ENCODE measurements at regions of chr14 and their contacts with region 1.

Region 1: GRCh38 chr14:99415496-99416281 is 65.0 kb downstream of the SETD3 start:
- DNase-seq: peak; percentile 23 to 40
- ATAC-seq: peak; percentile 92 to 95
- H3K4me3 ChIP-seq: no peak overlapping the region
- H3K27ac ChIP-seq: no peak overlapping the region
- H3K4me1 ChIP-seq: peaks cover 14 to 20% of the 10 kb centered on the region in 2 donors
- H3K27me3 ChIP-seq: no peaks in the 10 kb centered on the region
- CTCF ChIP-seq: peak; percentile 66 to 82 (median 75)
- POLR2A ChIP-seq: no peak

Region 2: GRCh38 chr14:99320105-99320572 is 95.5 kb before region 1 on chr14:
- in situ Hi-C with region 1: no loop called
- intact Hi-C with region 1: loop called (anchors 5 kb)
- DNase-seq: no peak
- ATAC-seq: no peak
- H3K4me3 ChIP-seq: no peak overlapping the region
- H3K27ac ChIP-seq: no peak overlapping the region
- H3K4me1 ChIP-seq: no peaks in the 10 kb centered on the region
- H3K27me3 ChIP-seq: peaks cover 0 to 4% (median 0%) of the 10 kb centered on the region in 3 donors
- CTCF ChIP-seq: peak; percentile 30 to 70 (median 48)
- POLR2A ChIP-seq: no peak

Region 3: DNA sequence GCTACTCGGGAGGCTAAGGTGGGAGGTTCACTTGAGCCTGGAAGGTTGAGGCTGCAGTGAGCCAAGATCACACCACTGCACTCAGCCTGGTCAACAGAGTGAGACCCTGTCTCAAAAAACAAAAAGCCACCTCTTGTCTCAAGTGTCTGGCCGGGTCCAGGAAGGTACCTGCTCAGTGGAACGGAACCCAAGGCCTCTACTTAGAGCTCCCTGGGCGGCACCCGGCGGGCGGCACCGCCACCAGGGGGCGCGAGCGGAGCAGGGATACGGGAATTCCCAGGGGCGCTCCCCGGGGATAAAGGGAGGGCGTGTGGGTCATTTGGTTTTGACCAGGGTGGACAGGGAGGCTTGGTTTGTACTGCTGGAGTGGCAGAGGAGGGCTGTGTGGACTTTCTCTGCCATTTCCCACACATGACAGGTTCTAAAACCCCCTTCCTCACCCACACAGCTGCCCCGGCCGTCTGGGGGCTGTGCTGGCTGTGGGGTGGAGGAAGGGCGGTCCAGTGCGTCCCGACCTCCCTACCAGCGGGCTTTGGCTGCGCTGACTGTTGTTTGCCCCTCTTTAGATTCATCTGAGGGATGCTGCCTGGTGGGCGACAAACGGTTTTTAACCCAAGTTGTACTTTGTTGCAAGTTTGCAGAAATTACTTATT is 26.4 kb before region 1 on chr14:
- in situ Hi-C with region 1: no loop called
- intact Hi-C with region 1: loop called (anchors 1 kb)
- DNase-seq: peak in 1 of 2 donors; percentile 20
- ATAC-seq: peak; percentile 52 to 57
- H3K4me3 ChIP-seq: no peak overlapping the region
- H3K27ac ChIP-seq: no peak overlapping the region
- H3K4me1 ChIP-seq: peaks cover 0 to 6% of the 10 kb centered on the region in 2 donors
- H3K27me3 ChIP-seq: peaks cover 2 to 7% (median 6%) of the 10 kb centered on the region in 3 donors
- CTCF ChIP-seq: peak; percentile 13 to 88 (median 79)
- POLR2A ChIP-seq: no peak